PC-9 (cell line): ENCODE measurements at regions of chr6 and their contacts with region 1.

Region 1: GRCh38 chr6:132041706-132042105 is 90.5 kb upstream of the CCN2 start:
- DNase-seq: no peak
- H3K4me3 ChIP-seq: no peak overlapping the region
- H3K27ac ChIP-seq: no peak overlapping the region
- H3K4me1 ChIP-seq: no peaks in the 10 kb centered on the region
- H3K27me3 ChIP-seq: no peaks in the 10 kb centered on the region
- CTCF ChIP-seq: no peak

Region 2: DNA sequence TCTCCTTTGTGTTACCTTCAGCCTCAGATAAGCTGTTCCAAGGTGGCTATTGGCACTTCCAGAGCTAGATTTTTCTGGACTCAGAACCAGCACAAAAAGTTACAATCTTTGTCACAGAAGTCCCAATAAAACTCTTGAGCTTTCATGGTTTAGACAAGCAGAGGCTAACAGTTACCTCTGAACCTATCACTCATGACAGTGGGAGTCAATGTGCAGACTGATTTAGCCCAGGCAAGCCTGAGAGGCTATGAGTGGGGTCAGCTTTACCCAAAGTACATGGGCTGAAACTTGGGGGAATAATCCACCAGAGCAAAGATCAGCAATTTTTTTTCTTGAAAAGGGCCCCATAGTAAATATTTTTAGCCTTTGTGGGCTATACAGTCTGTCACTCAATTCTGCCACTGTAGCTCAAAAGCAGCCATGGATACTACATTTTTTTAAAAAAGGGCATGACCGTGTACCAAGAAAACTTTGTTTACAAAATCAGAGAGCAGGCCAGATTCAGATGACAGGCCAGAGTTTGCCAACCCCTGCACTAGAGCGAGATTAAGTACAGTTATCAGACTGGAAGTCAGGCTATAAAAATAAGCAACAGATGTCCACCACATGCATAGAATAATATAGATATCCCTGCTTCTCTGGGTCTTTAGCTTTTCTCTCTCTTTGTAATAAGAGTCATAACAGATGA is 110.5 kb before region 1 on chr6:
- CTCF ChIA-PET with region 1: no interaction called
- POLR2A ChIA-PET with region 1: interaction called, 21 read pairs
- intact Hi-C with region 1: no loop called
- DNase-seq: no peak
- H3K4me3 ChIP-seq: no peak overlapping the region
- H3K27ac ChIP-seq: no peak overlapping the region
- H3K4me1 ChIP-seq: no peaks in the 10 kb centered on the region; the same call in 1 of the 2 replicates
- H3K27me3 ChIP-seq: no peaks in the 10 kb centered on the region
- CTCF ChIP-seq: no peak

Region 3: DNA sequence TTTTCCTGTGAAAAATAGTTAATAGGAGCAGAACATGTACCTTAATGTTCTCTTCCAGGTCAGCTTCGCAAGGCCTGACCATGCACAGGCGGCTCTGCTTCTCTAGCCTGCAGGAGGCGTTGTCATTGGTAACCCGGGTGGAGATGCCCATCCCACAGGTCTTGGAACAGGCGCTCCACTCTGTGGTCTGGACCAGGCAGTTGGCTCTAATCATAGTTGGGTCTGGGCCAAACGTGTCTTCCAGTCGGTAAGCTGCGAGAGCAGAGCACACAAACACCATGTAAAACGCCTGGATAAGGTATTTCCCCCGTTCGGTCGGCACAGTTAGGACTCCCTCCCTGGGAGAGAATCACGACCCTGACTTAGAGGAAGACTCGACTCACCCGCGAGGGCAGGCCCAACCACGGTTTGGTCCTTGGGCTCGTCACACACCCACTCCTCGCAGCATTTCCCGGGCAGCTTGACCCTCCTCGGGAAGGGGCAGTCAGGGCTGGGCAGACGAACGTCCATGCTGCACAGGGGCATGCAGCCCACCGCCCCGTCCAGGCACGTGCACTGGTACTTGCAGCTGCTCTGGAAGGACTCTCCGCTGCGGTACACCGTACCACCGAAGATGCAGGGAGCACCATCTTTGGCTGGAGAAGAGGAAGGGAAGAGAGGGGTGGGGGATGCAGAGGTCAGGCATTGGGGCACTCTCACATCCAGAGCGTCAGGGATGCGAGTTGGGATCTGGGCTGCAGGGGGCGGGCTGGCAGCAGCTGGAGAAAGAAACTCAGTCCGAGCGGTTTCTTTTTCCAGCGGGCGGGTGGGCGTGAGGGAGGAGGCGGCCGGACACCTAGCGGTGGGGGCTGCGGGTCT is 91.6 kb before region 1 on chr6:
- CTCF ChIA-PET with region 1: no interaction called
- POLR2A ChIA-PET with region 1: no interaction called
- intact Hi-C with region 1: no loop called
- DNase-seq: no peak
- H3K4me3 ChIP-seq: no peak overlapping the region
- H3K27ac ChIP-seq: no peak overlapping the region
- H3K4me1 ChIP-seq: peaks cover 31% of the 10 kb centered on the region
- H3K27me3 ChIP-seq: no peaks in the 10 kb centered on the region
- CTCF ChIP-seq: no peak